ENCODE measurements at regions of chr15 and their contacts with region 1.

Region 1: GRCh38 chr15:74240002-74240568 is 4.0 kb downstream of the CCDC33 start:
- DNase-seq: peak; percentile 88
- ATAC-seq: peak; percentile 85 to 86

Region 2: GRCh38 chr15:74123658-74124057 is 116.4 kb before region 1 on chr15:
- intact Hi-C with region 1: no loop called
- DNase-seq: no peak
- ATAC-seq: no peak

Region 3: DNA sequence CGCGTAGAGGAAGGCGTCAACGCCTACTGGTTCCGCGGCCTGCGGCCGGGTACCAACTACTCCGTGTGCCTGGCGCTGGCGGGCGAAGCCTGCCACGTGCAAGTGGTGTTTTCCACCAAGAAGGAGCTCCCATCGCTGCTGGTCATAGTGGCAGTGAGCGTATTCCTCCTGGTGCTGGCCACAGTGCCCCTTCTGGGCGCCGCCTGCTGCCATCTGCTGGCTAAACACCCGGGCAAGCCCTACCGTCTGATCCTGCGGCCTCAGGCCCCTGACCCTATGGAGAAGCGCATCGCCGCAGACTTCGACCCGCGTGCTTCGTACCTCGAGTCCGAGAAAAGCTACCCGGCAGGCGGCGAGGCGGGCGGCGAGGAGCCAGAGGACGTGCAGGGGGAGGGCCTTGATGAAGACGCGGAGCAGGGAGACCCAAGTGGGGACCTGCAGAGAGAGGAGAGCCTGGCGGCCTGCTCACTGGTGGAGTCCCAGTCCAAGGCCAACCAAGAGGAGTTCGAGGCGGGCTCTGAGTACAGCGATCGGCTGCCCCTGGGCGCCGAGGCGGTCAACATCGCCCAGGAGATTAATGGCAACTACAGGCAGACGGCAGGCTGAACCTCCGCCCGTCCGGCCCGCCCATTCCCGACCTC is 105.6 kb before region 1 on chr15:
- intact Hi-C with region 1: loop called in 1 of 2 experiments (anchors 10 kb)
- DNase-seq: peak; percentile 67
- ATAC-seq: peak; percentile 24 to 25

Region 4: GRCh38 chr15:74222240-74223119 is 17.6 kb before region 1 on chr15:
- intact Hi-C with region 1: no loop called
- DNase-seq: no peak
- ATAC-seq: no peak

Region 5: GRCh38 chr15:74307827-74308644 is 68.0 kb after region 1 on chr15:
- intact Hi-C with region 1: no loop called
- DNase-seq: peak; percentile 47
- ATAC-seq: peak; percentile 80 to 88